ENCODE measurements at regions of chr7 and their contacts with region 1.

Region 1: GRCh38 chr7:97027427-97028234 is 3.0 kb upstream of the DLX5 start:
- DNase-seq: peak; percentile 79
- H3K4me3 Mint-ChIP-seq: peak overlapping the region; percentile 55
- H3K27ac Mint-ChIP-seq: no peak overlapping the region
- H3K4me1 Mint-ChIP-seq: peaks cover 38% of the 10 kb centered on the region
- H3K27me3 Mint-ChIP-seq: peaks cover 62% of the 10 kb centered on the region

Region 2: GRCh38 chr7:96075510-96076349 is 951.9 kb before region 1 on chr7:
- CTCF ChIA-PET with region 1: interaction called, 50 read pairs
- POLR2A ChIA-PET with region 1: no interaction called
- intact Hi-C with region 1: loop called (anchors 1 kb)
- DNase-seq: peak; percentile 58
- H3K4me3 Mint-ChIP-seq: peak overlapping the region; percentile 53
- H3K27ac Mint-ChIP-seq: no peak overlapping the region
- H3K4me1 Mint-ChIP-seq: peaks cover 7% of the 10 kb centered on the region
- H3K27me3 Mint-ChIP-seq: peaks cover 20% of the 10 kb centered on the region

Region 3: DNA sequence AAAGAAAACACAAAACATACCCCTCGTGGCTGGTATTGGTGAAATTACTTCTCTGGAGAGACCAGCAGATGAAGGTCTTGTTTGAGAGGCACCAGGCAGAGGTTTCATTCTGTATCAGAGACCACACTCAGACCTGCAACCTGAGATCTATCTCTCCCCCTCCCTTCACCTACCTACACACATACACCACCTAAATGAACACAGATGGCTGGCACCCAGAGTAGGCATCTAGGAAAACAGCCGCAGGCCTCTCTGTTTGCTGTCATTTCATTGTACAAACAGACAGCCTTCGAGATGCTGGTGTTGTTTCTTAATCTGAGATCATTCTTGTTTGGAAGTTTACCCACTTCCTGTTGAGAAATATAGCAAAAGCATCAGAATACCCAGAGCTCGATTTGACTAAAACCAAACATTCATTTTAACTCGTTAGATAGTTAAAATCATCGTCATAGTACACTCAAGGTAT is 531.8 kb before region 1 on chr7:
- CTCF ChIA-PET with region 1: no interaction called
- POLR2A ChIA-PET with region 1: no interaction called
- intact Hi-C with region 1: loop called (anchors 10 kb)
- DNase-seq: peak; percentile 64
- H3K4me3 Mint-ChIP-seq: peak overlapping the region; percentile 16
- H3K27ac Mint-ChIP-seq: peak overlapping the region; percentile 49
- H3K4me1 Mint-ChIP-seq: peaks cover 11% of the 10 kb centered on the region
- H3K27me3 Mint-ChIP-seq: peaks cover 3% of the 10 kb centered on the region

Region 4: DNA sequence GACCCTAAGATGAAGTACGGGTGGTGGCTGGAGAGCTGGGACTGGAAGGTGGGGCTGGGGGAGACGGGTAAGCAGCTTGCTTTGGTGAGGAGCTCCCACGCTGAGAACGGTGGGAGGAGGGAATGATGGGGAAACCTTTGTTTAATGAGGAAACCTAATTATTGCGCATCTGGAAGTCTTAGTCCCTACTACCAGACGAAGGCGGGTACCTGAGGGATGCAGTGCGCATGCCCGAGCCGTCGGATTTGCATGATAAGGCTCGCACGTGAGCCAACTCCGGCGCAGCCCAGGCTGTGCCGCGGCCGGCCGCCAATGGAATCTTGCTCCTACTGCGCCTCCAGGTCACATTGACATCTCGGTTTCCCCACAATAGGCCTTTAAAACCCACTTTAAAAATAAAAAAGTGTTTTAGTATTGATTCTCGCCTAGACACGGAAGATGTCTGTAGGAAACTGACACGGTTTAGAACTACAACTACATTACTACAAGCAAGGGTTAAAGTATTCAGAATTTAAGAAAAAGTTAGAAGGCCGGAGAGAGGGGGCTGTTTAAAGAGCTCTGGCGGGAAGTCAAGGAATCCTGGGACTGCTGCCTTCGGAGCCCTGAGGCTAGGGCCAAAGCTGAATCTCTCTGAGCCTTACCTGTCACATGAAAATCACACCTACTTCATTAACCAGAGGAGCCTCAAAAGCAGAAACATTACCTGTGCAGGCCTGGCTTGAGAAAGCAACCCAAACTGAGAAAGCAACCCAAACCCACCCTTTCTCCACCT is 34.4 kb before region 1 on chr7:
- CTCF ChIA-PET with region 1: interaction called, 6 read pairs
- POLR2A ChIA-PET with region 1: no interaction called
- intact Hi-C with region 1: loop called (anchors 5 kb)
- DNase-seq: no peak
- H3K4me3 Mint-ChIP-seq: no peak overlapping the region
- H3K27ac Mint-ChIP-seq: no peak overlapping the region
- H3K4me1 Mint-ChIP-seq: peaks cover 2% of the 10 kb centered on the region
- H3K27me3 Mint-ChIP-seq: peaks cover 85% of the 10 kb centered on the region

Region 5: DNA sequence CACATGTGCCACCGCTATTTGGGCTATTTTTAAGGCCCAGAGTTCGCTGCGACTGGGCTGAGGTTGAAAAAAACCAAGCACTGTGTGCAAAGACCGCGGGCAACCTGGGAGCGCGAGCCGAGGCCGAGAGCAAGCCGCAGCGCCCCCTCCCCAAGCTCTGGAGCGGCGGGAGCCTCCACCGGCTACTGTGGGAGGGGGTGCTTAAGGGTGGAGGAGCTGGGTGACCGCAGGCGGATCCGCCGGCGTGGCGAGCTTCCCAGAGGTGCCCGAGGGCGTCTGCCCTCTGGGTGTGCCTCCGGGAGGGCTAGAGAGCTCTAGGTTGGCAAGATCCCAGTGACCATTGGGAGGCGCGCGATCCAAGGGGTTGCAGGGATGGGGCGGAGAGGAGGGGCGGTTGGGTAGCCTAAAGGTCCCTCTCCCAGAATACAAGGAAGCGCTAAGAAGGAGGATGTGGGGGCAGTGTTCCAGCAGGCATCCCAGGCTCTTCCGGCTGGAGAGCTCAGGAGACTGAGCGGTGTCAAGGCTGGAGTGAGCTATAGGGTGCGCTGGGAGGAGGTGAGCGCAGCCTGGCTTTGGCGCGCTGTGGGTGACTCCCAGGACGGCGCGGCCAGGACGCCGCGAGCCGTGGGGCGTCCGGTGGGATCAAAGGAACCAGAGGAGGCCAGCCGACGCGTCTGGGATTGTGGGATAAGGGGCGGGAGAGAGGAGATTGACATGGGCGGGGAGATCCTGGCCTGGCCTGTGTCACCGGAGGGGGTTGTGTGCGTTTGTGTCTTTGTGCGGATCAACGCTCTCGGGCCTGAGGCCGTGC is 11.0 kb before region 1 on chr7:
- CTCF ChIA-PET with region 1: interaction called, 24 read pairs
- POLR2A ChIA-PET with region 1: interaction called, 3 read pairs
- intact Hi-C with region 1: no loop called
- DNase-seq: no peak
- H3K4me3 Mint-ChIP-seq: no peak overlapping the region
- H3K27ac Mint-ChIP-seq: no peak overlapping the region
- H3K4me1 Mint-ChIP-seq: peaks cover 20% of the 10 kb centered on the region
- H3K27me3 Mint-ChIP-seq: peaks cover 89% of the 10 kb centered on the region

Measured in activated CD4-positive, alpha-beta memory T cell treated with anti-CD3 and anti-CD28 coated beads for 36 hours (primary cell).